Right ventricle myocardium inferior (tissue), 1 donor: ENCODE measurements at regions of chr2 and their contacts with region 1.

Region 1: GRCh38 chr2:182650704-182651103 is 65.4 kb upstream of the DNAJC10 start:
- DNase-seq: no peak
- ATAC-seq: peak; percentile 71

Region 2: DNA sequence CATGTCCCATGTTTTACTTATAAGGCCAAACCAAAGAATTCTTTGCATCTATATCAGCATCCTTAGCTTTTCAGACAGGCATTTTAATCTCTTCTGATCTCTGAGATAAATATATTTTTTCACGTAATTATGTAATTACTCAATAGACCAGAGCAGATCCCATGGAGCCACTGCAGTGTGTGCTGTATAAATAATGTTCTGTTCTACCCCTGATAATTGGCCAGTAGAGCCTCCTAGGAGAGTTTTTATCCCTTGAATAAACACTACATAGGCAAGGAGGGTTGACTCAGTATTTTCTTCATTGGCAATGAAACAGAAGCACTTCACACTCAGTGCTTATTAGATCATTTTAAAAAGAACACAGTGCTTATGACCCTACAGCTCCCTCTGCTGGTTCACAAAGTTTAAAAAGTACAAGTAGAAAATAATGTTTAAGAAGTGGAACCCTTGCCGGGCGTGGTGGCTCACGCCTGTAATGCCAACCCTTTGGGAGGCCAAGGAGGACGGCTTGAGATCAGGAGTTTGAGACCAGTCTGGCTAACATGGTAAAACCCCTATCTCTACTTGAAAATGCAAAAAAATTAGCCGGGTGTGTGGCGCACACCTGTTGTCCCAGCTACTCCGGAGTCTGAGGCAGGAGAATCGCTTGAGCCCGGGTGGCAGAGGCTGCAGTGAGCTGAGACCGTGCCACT is 573.1 kb before region 1 on chr2:
- intact Hi-C with region 1: loop called (anchors 5 kb)
- DNase-seq: peak; percentile 66
- ATAC-seq: peak; percentile 96

Region 3: GRCh38 chr2:182144777-182145165 is 505.9 kb before region 1 on chr2:
- intact Hi-C with region 1: no loop called
- DNase-seq: no peak
- ATAC-seq: peak; percentile 94

Region 4: GRCh38 chr2:182186132-182186735 is 464.5 kb before region 1 on chr2:
- intact Hi-C with region 1: loop called (anchors 1 kb)
- DNase-seq: no peak
- ATAC-seq: peak; percentile 55

Region 5: DNA sequence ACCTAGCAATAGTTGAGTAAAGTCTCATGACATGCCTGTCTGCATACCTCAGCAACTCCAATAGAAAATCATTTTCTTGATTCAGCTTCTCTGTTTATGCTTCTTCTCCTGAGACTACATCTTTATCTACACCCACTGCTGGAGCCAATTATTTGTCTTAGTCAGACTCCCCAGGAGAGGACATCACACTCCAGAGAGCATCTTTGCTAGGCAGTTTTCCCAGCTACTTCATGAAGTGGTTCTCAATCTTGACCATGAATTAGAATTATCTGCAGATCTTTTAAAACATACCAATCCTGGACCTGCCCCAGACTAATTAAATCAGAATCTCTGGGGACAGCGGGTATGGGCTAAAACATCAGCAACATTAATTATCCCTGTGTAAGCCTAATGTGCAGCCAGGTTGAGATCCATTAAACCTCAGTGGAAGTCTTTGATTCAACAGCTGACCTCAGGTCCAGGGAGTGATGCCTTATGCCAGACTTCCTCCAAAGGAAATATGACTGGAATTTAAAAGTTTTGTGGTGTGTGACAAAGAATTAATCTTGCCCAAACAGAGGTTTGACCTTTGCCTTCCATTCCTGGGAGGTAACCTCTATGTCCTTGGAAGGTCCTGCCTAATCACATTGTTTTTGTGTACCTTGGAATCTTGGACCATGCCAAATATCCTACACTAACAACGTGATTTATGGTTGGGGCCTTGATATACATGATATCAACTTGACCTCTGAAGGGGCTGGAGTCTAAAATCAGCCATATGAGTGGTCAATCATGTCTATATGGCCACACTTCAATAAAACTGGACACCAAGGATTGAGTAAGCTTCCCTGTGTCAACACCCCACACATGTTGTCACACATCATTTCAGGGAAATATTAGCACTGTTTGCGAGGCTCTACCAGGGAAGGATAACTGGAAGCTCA is 34.0 kb before region 1 on chr2:
- intact Hi-C with region 1: no loop called
- DNase-seq: no peak
- ATAC-seq: no peak